GM10248 (cell line): ENCODE measurements at regions of chr3 and their contacts with region 1.

Region 1: DNA sequence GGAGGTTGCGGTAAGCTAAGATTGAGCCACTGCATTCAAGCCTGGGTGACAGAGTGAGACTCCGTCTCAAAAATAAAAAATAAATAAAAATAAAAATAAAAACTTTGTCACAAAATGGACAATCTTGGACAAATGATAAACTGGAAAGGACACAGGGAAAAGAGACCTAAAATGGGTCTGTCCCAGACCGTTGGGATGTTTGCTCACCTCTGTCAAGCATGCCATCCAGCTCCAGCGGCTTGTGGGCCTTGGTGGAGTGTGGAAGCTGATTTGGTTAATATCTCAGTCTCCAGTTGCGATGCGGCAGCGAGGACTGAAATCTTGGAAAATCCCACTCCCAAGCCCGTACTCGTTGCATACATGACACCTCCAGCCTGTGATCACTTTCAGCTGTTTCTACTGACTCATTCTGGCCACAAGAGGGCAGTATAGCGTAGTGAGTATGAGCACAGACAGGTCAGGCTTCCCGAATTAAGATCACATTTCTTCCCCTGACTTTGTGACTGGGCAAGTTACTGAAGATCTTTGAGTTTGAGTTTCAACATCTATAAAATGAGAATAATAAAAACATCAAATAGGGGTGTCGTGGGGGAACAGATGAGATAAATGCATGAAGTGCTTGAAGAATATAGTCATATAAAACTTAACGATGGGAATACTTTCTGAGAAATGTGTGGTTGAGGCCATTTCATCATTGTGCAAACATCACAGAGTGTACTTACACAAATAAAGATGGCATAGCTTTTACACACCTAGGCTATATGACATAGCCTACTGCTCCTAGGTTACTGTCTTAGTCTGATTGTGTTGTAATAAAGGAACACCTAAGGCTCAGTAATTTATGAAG is 19.6 kb upstream of the MOBP start:
- DNase-seq: peak; percentile 79
- CTCF ChIP-seq: peak; percentile 88

Region 2: GRCh38 chr3:39434574-39434973 is 13.3 kb before region 1 on chr3:
- CTCF ChIA-PET with region 1: interaction called, 29 read pairs
- POLR2A ChIA-PET with region 1: interaction called, 3 read pairs
- DNase-seq: no peak
- CTCF ChIP-seq: no peak

Region 3: GRCh38 chr3:39460677-39461076 is 12.8 kb after region 1 on chr3:
- CTCF ChIA-PET with region 1: interaction called, 34 read pairs
- POLR2A ChIA-PET with region 1: no interaction called
- DNase-seq: no peak
- CTCF ChIP-seq: no peak

Region 4: GRCh38 chr3:39473452-39474127 is 25.7 kb after region 1 on chr3:
- CTCF ChIA-PET with region 1: interaction called, 11 read pairs
- POLR2A ChIA-PET with region 1: no interaction called
- DNase-seq: no peak
- CTCF ChIP-seq: no peak

Region 5: DNA sequence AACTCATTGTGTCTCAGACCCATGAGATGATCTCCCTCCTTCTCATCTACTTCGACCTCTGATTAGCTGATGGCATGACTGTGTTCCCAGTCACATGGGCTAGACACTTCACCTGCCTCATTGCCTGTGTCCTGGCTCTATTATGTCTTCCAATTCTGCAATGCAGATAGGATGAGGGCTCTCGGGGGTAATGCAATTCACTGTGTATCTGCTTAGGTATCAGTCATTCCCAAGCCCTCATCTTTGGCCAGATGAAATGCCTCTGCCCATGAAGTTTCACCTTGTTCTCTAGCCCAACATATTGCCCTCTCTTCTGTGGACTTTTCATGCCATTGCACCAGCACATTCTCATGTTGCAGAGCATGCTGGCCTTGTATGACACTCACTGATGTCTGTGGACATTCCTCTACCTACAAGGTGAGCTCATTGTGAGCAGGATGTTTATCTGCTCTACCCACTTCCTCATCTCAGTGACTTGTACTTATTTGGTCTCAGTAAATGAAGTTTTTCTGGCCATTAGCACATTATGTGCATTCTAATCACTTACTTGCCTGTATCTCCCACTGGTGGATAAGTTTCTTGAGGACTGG is 51.9 kb after region 1 on chr3:
- CTCF ChIA-PET with region 1: interaction called, 16 read pairs
- POLR2A ChIA-PET with region 1: no interaction called
- DNase-seq: no peak
- CTCF ChIP-seq: no peak

Region 6: GRCh38 chr3:40179016-40179415 is 731.2 kb after region 1 on chr3:
- CTCF ChIA-PET with region 1: interaction called, 12 read pairs
- POLR2A ChIA-PET with region 1: no interaction called
- DNase-seq: peak; percentile 54
- CTCF ChIP-seq: peak; percentile 78